ENCODE measurements at regions of chr2 and their contacts with region 1.

Region 1: DNA sequence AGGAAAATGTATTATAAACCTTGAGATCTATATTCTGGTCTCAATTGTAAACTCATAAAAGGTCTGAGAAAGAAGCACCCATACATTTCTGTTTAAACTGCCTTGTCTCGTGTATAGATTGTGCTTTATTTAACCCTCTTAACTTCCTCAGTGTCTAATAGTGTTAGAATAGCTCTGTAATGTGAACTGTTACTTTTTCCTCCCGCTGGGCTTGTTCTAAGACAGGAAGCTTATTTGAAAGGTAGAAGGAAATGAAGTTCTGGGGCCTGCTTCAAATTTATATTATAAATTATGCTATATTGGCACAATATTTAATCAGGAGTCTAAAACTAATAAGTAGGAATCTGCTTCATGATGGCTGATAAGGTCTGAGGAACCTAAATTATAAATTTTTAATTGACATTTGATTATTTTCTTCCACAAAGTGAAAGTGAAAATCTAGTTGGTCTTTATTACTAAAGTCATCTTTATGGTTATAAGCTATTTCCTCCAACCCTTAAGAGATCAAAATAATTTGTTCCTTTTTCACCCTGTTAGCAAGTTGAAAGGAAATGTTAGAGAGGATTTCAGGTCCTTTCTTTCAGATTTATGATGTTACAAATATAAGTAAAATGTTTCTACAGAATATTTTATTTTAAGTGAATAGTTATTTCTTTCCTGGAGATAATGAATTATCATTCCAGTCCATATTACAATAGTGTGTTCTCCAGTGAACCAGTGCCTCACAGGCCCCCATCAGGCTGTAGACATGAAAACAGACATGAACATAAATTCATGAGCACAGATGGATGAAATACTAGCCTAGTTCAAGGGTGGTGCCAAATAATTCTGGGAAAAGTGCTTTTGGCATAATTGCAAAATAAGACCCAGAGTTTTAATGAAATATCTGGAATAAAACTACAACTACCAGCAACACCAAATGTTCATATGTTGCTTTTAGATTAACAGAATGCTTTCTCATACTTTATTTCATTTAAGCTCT is 7.9 kb downstream of the MFSD6 start:
- DNase-seq: no peak
- H3K4me3 ChIP-seq: no peak overlapping the region
- H3K27ac ChIP-seq: no peak overlapping the region
- H3K4me1 ChIP-seq: no peaks in the 10 kb centered on the region
- H3K27me3 ChIP-seq: no peaks in the 10 kb centered on the region
- CTCF ChIP-seq: no peak

Region 2: DNA sequence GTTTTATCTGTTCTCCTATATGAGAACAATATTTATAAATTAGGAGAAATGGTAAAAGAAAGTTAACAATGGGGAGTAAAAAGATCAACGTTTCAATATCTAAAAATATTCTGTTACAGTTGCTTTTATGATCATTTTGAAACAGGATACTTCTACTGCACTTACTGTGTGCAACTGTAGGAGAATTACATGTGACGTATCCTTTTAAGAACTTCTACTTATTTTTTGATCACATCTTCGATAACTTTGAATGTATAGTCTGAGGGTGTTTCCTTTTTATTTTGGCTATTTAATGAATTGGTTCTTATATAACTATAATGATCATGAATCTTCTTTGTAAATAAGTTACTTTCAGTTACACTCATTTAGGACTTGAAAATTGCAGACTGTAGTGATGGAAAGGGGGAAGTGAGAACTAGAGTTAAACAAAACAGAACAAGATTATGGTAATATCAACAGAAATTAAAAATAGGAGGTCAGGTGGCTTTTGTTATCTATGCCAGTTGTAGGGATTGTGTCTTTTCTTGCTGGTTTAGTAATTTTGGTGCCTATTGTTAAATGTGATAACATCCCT is 463.5 kb before region 1 on chr2:
- CTCF ChIA-PET with region 1: no interaction called
- POLR2A ChIA-PET with region 1: no interaction called
- intact Hi-C with region 1: no loop called
- DNase-seq: no peak
- H3K4me3 ChIP-seq: no peak overlapping the region
- H3K27ac ChIP-seq: no peak overlapping the region
- H3K4me1 ChIP-seq: no peaks in the 10 kb centered on the region
- H3K27me3 ChIP-seq: no peaks in the 10 kb centered on the region
- CTCF ChIP-seq: no peak

Region 3: GRCh38 chr2:190319555-190320498 is 96.3 kb before region 1 on chr2 and contains the start of gene HIBCH:
- CTCF ChIA-PET with region 1: no interaction called
- POLR2A ChIA-PET with region 1: no interaction called
- intact Hi-C with region 1: no loop called
- DNase-seq: peak; percentile 94 to 95
- H3K4me3 ChIP-seq: peak within 1 kb of the TSS; percentile 85
- H3K27ac ChIP-seq: peak within 1 kb of the TSS; percentile 55
- H3K4me1 ChIP-seq: peaks cover 9% of the 10 kb centered on the region
- H3K27me3 ChIP-seq: no peaks in the 10 kb centered on the region
- CTCF ChIP-seq: peak; percentile 57
- total RNA-seq, gene HIBCH: 14.7 and 17.4 TPM in 2 replicates

Region 4: DNA sequence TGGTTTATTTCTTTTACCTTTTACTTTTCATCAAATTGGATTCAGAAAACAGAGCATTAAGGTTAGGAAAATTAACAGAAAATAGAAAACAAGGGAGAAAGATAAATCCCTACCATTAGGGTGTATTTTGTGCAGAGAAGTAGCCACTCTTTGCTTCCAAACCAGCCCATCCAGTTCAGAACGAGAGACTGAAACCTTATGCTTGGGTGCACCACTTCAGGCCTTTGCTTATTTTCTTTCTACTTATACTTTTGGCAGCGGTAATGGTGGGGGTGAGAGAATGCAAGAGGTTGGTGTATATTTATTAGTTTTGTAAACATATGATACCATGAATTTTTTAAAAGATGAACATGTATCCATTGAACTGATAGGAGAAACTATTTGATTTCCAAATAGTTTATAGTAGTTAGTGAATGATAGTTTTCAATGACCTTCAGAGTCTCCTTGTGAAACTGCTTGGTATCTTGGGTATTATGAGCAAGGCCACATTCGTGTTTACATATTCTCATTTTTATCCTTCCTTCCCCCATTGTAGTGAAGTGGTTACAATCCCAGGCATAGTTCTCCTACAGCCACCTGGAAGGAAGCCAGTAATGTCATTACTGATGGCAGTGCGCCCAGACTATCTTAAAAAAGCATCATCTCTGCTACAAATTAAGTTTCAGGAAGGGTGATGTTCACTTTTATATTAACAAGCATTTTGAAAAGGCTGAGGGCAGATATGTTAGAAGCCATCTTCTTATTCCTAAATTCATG is 52.9 kb after region 1 on chr2:
- CTCF ChIA-PET with region 1: no interaction called
- POLR2A ChIA-PET with region 1: interaction called, 16 read pairs
- intact Hi-C with region 1: loop called (anchors 10 kb)
- DNase-seq: peak; percentile 64 to 68
- H3K4me3 ChIP-seq: no peak overlapping the region
- H3K27ac ChIP-seq: 0 out of 2 replicates have a peak overlapping the region, but pooled peaks have one; percentile 32
- H3K4me1 ChIP-seq: 0 out of 2 replicates have a peak, but pooled peaks cover 5% of the 10 kb centered on the region
- H3K27me3 ChIP-seq: no peaks in the 10 kb centered on the region
- CTCF ChIP-seq: no peak

Measured in PC-9 (cell line).